Esophagus muscularis mucosa (tissue), 4 donors: ENCODE measurements at regions of chr10 and their contacts with region 1.

Region 1: DNA sequence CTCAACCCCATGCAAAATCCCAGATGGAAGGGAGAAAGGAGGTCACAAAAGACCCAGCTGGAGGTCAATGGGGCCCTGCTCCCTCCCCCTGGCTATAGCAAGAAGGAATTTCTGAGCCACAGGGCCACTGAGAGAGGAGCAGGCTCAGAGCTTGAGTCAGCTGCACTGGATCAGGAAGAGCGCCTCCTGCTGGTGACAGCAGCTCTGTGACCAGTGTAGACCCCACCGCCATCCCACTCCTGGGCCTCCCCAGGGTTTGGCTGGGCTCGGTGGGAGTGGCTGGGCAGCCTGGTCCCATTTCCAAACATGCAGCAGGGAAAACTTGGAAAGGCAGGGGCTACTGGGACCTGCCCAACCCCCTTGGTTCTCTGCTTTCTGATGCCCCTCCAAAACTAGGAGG is 31.5 kb upstream of the PRLHR start:
- DNase-seq: no peak
- H3K4me3 ChIP-seq: no peak overlapping the region
- H3K27ac ChIP-seq: no peak overlapping the region
- H3K4me1 ChIP-seq: peaks cover 9 to 30% (median 19%) of the 10 kb centered on the region in 4 donors
- H3K27me3 ChIP-seq: peaks cover 0 to 3% (median 0%) of the 10 kb centered on the region in 4 donors
- CTCF ChIP-seq: no peak
- EP300 ChIP-seq: no peak
- POLR2A ChIP-seq: no peak

Region 2: GRCh38 chr10:117053482-117053881 is 1573.5 kb before region 1 on chr10:
- intact Hi-C with region 1: no loop called
- DNase-seq: no peak
- H3K4me3 ChIP-seq: no peak overlapping the region
- H3K27ac ChIP-seq: no peak overlapping the region
- H3K4me1 ChIP-seq: no peaks in the 10 kb centered on the region
- H3K27me3 ChIP-seq: peaks cover 0 to 7% (median 0%) of the 10 kb centered on the region in 4 donors
- CTCF ChIP-seq: no peak
- EP300 ChIP-seq: no peak
- POLR2A ChIP-seq: no peak

Region 3: DNA sequence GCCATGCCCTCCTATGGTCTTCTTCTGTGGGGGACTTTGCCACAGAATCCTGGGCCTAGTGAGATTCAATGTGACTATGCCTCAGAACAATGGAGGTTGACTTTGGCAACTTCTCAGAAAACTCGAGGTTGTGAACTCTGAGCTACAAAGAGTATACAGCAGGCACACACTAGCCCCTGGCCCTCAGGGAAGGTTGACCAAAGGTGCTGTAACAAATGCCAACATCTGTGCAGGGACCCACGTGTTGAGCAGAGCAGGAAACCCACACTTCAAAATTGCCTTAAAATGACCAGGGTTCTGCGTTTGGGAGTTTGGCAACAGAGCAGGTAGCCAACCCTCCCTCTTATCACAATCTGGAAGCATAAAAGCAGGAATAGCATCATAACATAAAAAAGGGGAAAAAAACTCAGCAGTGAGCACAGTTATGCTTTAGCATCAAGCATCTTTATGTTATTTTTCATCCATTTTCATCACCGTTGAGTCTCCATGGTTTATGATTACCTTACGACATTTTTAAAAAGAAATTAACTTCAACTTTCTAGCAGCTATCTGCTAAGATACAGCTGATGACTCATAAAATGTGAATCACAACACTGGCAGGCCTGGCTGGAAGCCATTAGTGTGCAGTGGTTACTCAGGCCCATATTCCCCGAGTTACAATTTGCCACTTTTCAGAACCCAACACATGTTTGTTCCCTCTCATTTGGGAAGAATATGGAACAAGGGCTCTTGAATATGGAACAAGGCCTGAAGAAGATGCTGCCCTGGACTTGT is 42.6 kb before region 1 on chr10:
- intact Hi-C with region 1: loop called (anchors 5 kb)
- DNase-seq: no peak
- H3K4me3 ChIP-seq: no peak overlapping the region
- H3K27ac ChIP-seq: no peak overlapping the region
- H3K4me1 ChIP-seq: peaks cover 0 to 6% (median 0%) of the 10 kb centered on the region in 4 donors
- H3K27me3 ChIP-seq: peaks cover 0 to 3% (median 0%) of the 10 kb centered on the region in 4 donors
- CTCF ChIP-seq: no peak
- EP300 ChIP-seq: no peak
- POLR2A ChIP-seq: no peak

Region 4: GRCh38 chr10:118809357-118810220 is 182.6 kb after region 1 on chr10:
- intact Hi-C with region 1: no loop called
- DNase-seq: no peak
- H3K4me3 ChIP-seq: no peak overlapping the region
- H3K27ac ChIP-seq: no peak overlapping the region
- H3K4me1 ChIP-seq: no peaks in the 10 kb centered on the region
- H3K27me3 ChIP-seq: no peaks in the 10 kb centered on the region
- CTCF ChIP-seq: no peak
- EP300 ChIP-seq: no peak
- POLR2A ChIP-seq: no peak